Brain microvascular endothelial cell (primary cell): ENCODE measurements at regions of chr2 and their contacts with region 1.

Region 1: GRCh38 chr2:178804791-178805190 is 2.4 kb downstream of the TTN start:
- DNase-seq: peak; percentile 5
- H3K4me3 ChIP-seq: no peak overlapping the region
- H3K27ac ChIP-seq: no peak overlapping the region
- H3K27me3 ChIP-seq: no peaks in the 10 kb centered on the region
- CTCF ChIP-seq: peak; percentile 47

Region 2: GRCh38 chr2:178914259-178914849 is 109.6 kb after region 1 on chr2:
- in situ Hi-C with region 1: loop called (anchors 25 kb)
- DNase-seq: peak; percentile 91
- H3K4me3 ChIP-seq: no peak overlapping the region
- H3K27ac ChIP-seq: no peak overlapping the region
- H3K27me3 ChIP-seq: no peaks in the 10 kb centered on the region
- CTCF ChIP-seq: peak; percentile 92